ENCODE measurements at regions of chr17 and their contacts with region 1.

Region 1: GRCh38 chr17:35764123-35764991 is 3.7 kb downstream of the C17orf50 start:
- DNase-seq: peak; percentile 82
- H3K4me3 ChIP-seq: peak overlapping the region; percentile 51
- H3K27ac ChIP-seq: no peak overlapping the region
- H3K4me1 ChIP-seq: no peaks in the 10 kb centered on the region
- H3K27me3 ChIP-seq: no peaks in the 10 kb centered on the region
- CTCF ChIP-seq: peak; percentile 64

Region 2: DNA sequence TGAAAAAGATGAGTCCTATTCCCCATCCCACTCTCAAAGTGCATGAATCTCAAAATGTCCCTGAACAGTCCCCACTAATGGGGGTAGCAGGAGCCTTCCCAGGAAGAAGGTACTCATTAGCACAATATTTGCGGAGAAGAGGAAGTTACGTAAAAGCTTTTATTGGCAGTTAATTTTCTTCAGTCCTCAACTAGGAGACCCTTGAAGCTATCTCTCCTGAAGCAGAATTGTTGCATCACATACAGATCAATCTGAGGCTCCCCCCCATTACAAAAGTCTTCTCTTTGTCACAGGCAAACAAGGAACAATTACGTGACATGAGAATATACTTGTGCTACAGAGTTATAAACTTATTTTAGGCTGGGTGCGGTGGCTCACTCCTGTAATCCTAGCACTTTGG is 241.1 kb before region 1 on chr17:
- CTCF ChIA-PET with region 1: interaction called, 12 read pairs
- POLR2A ChIA-PET with region 1: no interaction called
- intact Hi-C with region 1: no loop called
- DNase-seq: peak; percentile 29
- H3K4me3 ChIP-seq: no peak overlapping the region
- H3K27ac ChIP-seq: no peak overlapping the region
- H3K4me1 ChIP-seq: no peaks in the 10 kb centered on the region
- H3K27me3 ChIP-seq: no peaks in the 10 kb centered on the region
- CTCF ChIP-seq: no peak

Region 3: GRCh38 chr17:35808962-35809854 is 44.9 kb after region 1 on chr17 and contains the start of gene TAF15:
- CTCF ChIA-PET with region 1: interaction called, 13 read pairs
- POLR2A ChIA-PET with region 1: interaction called, 5 read pairs
- intact Hi-C with region 1: loop called (anchors 5 kb)
- DNase-seq: peak; percentile 96
- H3K4me3 ChIP-seq: peak within 1 kb of the TSS; percentile 84
- H3K27ac ChIP-seq: peak within 1 kb of the TSS; percentile 97
- H3K4me1 ChIP-seq: peaks cover 17% of the 10 kb centered on the region
- H3K27me3 ChIP-seq: no peaks in the 10 kb centered on the region
- CTCF ChIP-seq: peak; percentile 63
- total RNA-seq, gene TAF15: 108 TPM in 2 replicates

Measured in A673 (cell line).